Heart right ventricle (tissue), 16 donors: ENCODE measurements at regions of chr16 and their contacts with region 1.

Region 1: GRCh38 chr16:4586291-4586690 is 28.4 kb downstream of the UBALD1 start:
- DNase-seq: no peak
- ATAC-seq: peak in 1 of 8 donors; percentile 62
- H3K4me3 ChIP-seq: no peak overlapping the region
- H3K27ac ChIP-seq: no peak overlapping the region
- H3K4me1 ChIP-seq: no peaks in the 10 kb centered on the region
- H3K27me3 ChIP-seq: no peaks in the 10 kb centered on the region
- CTCF ChIP-seq: no peak

Region 2: GRCh38 chr16:4506450-4506849 is 79.8 kb before region 1 on chr16:
- intact Hi-C with region 1: loop called in 3 of 10 experiments (anchors 5 to 10 kb)
- DNase-seq: peak in 1 of 2 donors; percentile 67
- ATAC-seq: peak; percentile 58 to 87 (median 77)
- H3K4me3 ChIP-seq: no peak overlapping the region
- H3K27ac ChIP-seq: peak overlapping the region in 4 of 10 donors; percentile 3 to 93 (median 27)
- H3K4me1 ChIP-seq: peaks cover 8 to 63% (median 40%) of the 10 kb centered on the region in 9 donors
- H3K27me3 ChIP-seq: no peaks in the 10 kb centered on the region
- CTCF ChIP-seq: peak; percentile 65 to 85 (median 79)

Region 3: DNA sequence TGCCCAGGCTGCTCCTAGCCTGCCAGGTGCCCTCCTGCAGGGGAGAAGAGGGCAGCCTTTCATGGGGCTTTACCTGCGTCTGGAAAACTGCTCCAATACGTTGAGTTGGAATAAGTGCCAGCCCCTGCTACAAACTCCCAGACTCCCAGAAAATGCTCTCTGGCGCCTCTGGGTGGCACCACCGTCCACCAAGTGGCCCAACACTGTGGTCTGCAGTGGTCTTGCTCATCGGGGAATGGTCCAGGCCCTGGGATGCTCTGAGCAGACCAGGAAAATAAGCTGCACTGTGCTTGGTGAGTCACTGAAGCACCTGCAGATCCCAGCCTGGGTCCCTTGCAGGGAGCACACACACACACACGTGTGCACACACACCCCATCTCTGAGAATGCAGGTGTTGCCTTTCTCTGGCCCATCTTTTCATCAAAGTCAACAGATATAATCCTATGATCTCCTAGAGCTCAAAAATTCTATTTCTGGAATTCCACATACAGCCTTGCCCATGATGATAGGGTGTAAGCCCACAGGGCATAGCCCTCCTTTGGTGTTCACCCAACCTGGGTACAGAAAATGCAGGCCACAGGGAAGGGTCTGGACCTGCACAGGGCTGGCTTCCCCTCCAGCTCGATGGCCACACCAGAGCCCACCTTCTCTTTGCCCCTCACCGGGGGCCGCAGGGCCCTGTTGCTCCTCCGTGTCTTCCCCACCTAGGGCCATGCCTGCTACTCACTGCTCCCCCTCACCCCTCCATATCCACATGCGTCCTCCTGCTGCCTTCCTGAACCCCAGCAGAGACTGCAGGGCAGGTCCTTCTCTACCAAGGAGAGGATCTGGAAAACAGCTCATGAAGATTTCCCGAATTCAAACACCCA is 68.2 kb before region 1 on chr16:
- intact Hi-C with region 1: loop called in 3 of 10 experiments (anchors 5 to 10 kb)
- DNase-seq: no peak
- ATAC-seq: peak in 3 of 8 donors; percentile 8 to 24 (median 19)
- H3K4me3 ChIP-seq: no peak overlapping the region
- H3K27ac ChIP-seq: peak overlapping the region in 1 of 10 donors; percentile 5
- H3K4me1 ChIP-seq: peaks cover 22 to 65% (median 50%) of the 10 kb centered on the region in 9 donors
- H3K27me3 ChIP-seq: no peaks in the 10 kb centered on the region
- CTCF ChIP-seq: peak; percentile 32 to 66 (median 56)